Lower leg skin (tissue), 4 donors: ENCODE measurements at regions of chr2 and their contacts with region 1.

Region 1: GRCh38 chr2:160225754-160226153 is 25.7 kb upstream of the ITGB6 start:
- DNase-seq: peak in 1 of 2 donors; percentile 61
- H3K4me3 ChIP-seq: no peak overlapping the region
- CTCF ChIP-seq: no peak
- POLR2A ChIP-seq: no peak

Region 2: GRCh38 chr2:160247296-160248035 is 21.7 kb after region 1 on chr2:
- intact Hi-C with region 1: loop called (anchors 1 kb)
- DNase-seq: no peak
- H3K4me3 ChIP-seq: no peak overlapping the region
- CTCF ChIP-seq: no peak
- POLR2A ChIP-seq: no peak

Region 3: DNA sequence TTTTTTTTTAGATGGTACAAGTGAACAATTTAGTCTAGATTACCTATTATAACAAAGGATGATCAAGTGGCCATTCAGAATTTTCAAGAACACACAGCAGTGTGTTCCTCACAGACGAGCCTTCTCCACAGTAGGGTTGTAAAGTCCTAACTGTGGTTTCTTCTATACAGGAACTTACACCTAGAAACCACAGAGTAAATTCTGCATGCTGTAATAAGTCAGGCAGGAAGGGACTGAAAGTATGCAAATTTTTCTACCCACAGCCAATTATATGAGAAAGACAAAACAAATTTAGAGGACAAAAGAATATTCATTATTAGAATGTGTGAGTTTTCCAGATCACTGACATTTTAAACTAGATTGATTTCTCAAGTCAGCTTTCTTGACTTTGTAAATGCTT is 168.4 kb after region 1 on chr2:
- intact Hi-C with region 1: no loop called
- DNase-seq: no peak
- H3K4me3 ChIP-seq: no peak overlapping the region
- CTCF ChIP-seq: no peak
- POLR2A ChIP-seq: no peak

Region 4: GRCh38 chr2:160836755-160837154 is 611.0 kb after region 1 on chr2:
- intact Hi-C with region 1: no loop called
- DNase-seq: no peak
- H3K4me3 ChIP-seq: no peak overlapping the region
- CTCF ChIP-seq: no peak
- POLR2A ChIP-seq: no peak